Left cardiac atrium (tissue), 4 donors: ENCODE measurements at regions of chr3 and their contacts with region 1.

Region 1: GRCh38 chr3:16247276-16248061 is 17.3 kb downstream of the DPH3 start:
- DNase-seq: peak; percentile 79
- ATAC-seq: peak; percentile 58 to 68

Region 2: GRCh38 chr3:15629860-15630597 is 617.4 kb before region 1 on chr3:
- intact Hi-C with region 1: loop called (anchors 10 kb)
- DNase-seq: peak; percentile 47
- ATAC-seq: peak; percentile 93 to 94

Region 3: DNA sequence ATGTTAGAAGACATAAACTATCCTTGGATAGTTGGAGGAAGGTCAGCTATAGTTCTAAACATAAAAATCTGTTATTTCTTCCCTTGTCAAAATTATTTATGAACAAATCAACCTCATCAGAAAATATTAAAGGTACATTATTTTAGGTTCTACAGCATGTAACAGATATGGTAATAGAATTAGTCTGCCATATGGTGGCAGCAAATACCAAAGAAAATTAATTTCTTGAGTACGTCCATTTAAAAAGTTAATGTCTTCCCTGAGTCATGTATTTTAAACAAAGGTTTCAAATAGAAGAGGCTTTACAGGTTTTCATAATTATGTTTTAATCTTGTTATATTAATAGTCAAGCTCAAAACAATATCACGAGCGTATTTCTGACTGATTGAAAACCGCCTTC is 431.8 kb before region 1 on chr3:
- intact Hi-C with region 1: loop called (anchors 5 kb)
- DNase-seq: no peak
- ATAC-seq: peak; percentile 42 to 55

Region 4: DNA sequence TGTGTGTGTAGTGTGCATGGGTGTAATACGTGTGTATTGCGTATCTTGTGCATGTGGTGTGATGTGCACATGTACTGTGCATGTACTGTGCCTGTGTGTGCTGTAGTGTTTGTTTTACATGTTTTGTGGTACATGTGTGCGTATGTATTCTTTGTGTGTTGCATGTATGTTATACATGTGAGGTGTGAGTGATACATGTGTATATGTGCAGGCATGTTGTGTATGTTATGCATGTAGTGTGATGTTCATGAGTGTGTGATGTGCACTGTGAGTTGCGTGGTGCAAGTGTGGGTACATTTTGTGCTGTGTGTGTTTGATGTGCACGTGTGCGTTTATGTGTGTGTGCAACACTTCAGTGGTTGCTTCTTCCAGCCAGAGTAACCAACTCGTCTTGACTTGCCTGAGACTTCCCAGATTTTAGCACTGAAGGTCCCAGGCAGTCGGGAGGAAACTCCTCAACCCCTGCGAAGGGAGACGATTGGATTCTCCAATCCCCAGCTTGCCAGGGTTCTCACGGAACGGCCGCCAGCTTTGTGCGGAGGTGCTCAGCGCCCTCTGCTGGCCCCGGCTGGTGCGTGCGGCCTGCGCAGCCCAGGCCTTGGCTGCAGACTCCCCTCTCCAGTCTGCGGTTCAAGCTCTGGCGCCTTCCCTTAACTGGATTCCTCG is 69.4 kb before region 1 on chr3:
- intact Hi-C with region 1: loop called in 1 of 2 experiments (anchors 5 kb)
- DNase-seq: peak; percentile 83
- ATAC-seq: peak; percentile 68 to 76